Activated T-helper 2 cell treated with anti-CD3 and anti-CD28 coated beads, Interferon-gamma antibody, Interleukin-2, Interleukin-4, amounts not matched to agents 10 μg/mL and 5 μg/mL and 100 μg/mL, durations not matched to agents 14 hours and 24 hours and 36 hours (primary cell): ENCODE measurements at regions of chr6 and their contacts with region 1.

Region 1: GRCh38 chr6:73695619-73696421 is at the start of gene CD109:
- DNase-seq: peak; percentile 71
- H3K4me3 Mint-ChIP-seq: peak within 1 kb of the TSS; percentile 86
- H3K27ac Mint-ChIP-seq: peak within 1 kb of the TSS; percentile 98
- H3K4me1 Mint-ChIP-seq: peaks cover 50% of the 10 kb centered on the region
- H3K27me3 Mint-ChIP-seq: no peaks in the 10 kb centered on the region
- total RNA-seq, gene CD109: 24.4 and 26.1 TPM in 2 replicates

Region 2: GRCh38 chr6:73675466-73676098 is 20.2 kb before region 1 on chr6:
- intact Hi-C with region 1: loop called (anchors 2 kb)
- DNase-seq: peak; percentile 58
- H3K4me3 Mint-ChIP-seq: no peak overlapping the region
- H3K27ac Mint-ChIP-seq: no peak overlapping the region
- H3K4me1 Mint-ChIP-seq: peaks cover 6% of the 10 kb centered on the region
- H3K27me3 Mint-ChIP-seq: peaks cover 6% of the 10 kb centered on the region

Region 3: GRCh38 chr6:73722318-73723060 is 26.7 kb after region 1 on chr6:
- intact Hi-C with region 1: loop called (anchors 1 kb)
- DNase-seq: no peak
- H3K4me3 Mint-ChIP-seq: peak overlapping the region; percentile 24
- H3K27ac Mint-ChIP-seq: peak overlapping the region; percentile 73
- H3K4me1 Mint-ChIP-seq: peaks cover 48% of the 10 kb centered on the region
- H3K27me3 Mint-ChIP-seq: no peaks in the 10 kb centered on the region

Region 4: DNA sequence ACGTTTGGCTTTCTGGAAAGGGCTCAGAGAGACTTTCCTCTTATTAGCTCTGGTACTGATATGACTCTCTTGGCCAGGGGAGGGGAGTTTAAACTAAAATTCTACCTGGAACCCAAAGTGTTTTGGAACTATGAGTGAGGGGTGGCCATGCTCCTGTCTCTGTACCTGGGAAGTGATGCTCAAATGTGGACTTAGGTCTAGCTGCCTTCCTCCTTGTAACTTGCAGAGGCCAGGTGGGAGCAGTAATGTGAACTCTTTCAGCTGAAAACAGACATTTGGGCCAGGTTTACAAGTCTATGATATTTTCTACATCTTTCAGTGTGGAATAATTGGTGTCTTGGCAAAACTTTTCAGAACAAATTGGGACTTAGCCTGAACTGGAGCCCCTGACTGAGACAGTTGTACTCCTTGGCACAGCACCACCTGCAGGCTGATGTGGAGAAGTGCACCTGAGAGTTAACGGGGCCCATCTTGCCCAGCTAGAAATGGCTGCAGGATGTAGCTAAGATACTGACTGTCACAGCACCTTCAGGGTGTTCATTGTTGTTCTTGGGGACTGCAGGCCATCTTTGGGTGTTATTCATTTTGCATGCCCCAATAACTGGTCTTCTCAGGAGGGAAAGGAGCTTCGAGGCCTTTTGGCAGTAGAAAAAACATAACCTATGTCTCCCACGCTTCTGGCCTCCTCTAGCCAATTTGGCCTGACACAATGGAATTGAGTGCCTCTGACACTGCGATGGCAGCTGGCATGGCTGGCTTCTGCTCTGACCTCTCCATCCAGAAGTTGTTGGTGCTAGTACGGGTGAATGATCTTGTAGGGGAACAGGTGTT is 37.2 kb after region 1 on chr6:
- intact Hi-C with region 1: loop called (anchors 1 kb)
- DNase-seq: peak; percentile 66
- H3K4me3 Mint-ChIP-seq: no peak overlapping the region
- H3K27ac Mint-ChIP-seq: peak overlapping the region; percentile 47
- H3K4me1 Mint-ChIP-seq: peaks cover 28% of the 10 kb centered on the region
- H3K27me3 Mint-ChIP-seq: no peaks in the 10 kb centered on the region

Region 5: GRCh38 chr6:74705451-74705850 is 1009.6 kb after region 1 on chr6:
- intact Hi-C with region 1: no loop called
- DNase-seq: no peak
- H3K4me3 Mint-ChIP-seq: no peak overlapping the region
- H3K27ac Mint-ChIP-seq: no peak overlapping the region
- H3K4me1 Mint-ChIP-seq: no peaks in the 10 kb centered on the region
- H3K27me3 Mint-ChIP-seq: no peaks in the 10 kb centered on the region